Activated CD4-positive, alpha-beta T cell treated with anti-CD3 and anti-CD28 coated beads for 36 hours (primary cell): ENCODE measurements at regions of chr12 and their contacts with region 1.

Region 1: DNA sequence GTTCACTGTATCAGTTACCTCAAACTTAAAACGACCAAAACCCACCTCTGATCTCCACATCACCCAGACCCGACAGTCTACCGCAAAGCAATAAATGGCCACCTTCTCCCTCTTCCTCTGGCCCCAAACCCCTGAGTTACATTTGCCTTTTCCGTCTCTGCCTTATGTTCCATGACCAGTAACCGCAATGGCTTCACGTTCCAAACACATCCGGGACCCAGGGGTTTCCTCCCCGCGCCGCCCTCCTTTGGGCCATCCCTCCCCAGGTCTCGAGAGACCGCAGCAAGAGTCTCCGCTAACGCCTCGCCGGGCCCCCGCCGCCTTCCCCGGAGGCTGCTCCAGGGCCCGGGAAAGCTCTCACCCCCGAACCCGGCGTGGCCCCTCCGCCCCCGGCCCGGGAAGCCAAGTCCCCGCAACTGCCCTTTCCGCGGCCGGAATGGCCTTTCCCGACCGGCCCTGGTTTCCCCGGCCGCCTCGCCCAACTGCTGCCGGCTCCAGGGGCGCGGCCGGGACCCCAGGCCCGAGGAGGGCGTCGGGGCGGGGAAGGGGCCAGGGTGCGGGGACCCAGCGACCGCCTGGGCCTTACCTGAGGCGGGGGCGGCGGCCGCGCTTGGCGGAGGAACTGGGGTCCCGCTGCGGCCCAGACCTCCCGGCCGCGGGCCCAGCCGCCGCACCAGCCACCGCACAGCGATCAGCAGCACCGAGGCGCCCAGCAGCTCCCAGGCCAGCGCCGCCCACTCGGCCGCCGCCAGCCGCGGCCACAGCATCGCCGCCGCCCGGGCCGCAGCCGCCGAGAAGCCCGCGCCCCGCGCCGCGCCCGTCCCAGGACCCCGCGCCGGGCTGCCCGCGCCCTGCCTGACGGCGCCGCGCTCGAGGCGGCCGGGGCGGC is at the start of gene ANKLE2:
- DNase-seq: peak; percentile 84
- ATAC-seq: peak; percentile 41
- H3K4me3 Mint-ChIP-seq: peak within 1 kb of the TSS; percentile 90
- H3K27ac Mint-ChIP-seq: peak within 1 kb of the TSS; percentile 98
- H3K4me1 Mint-ChIP-seq: peaks cover 33% of the 10 kb centered on the region
- H3K27me3 Mint-ChIP-seq: no peaks in the 10 kb centered on the region
- total RNA-seq, gene ANKLE2: 110 to 111 TPM

Region 2: DNA sequence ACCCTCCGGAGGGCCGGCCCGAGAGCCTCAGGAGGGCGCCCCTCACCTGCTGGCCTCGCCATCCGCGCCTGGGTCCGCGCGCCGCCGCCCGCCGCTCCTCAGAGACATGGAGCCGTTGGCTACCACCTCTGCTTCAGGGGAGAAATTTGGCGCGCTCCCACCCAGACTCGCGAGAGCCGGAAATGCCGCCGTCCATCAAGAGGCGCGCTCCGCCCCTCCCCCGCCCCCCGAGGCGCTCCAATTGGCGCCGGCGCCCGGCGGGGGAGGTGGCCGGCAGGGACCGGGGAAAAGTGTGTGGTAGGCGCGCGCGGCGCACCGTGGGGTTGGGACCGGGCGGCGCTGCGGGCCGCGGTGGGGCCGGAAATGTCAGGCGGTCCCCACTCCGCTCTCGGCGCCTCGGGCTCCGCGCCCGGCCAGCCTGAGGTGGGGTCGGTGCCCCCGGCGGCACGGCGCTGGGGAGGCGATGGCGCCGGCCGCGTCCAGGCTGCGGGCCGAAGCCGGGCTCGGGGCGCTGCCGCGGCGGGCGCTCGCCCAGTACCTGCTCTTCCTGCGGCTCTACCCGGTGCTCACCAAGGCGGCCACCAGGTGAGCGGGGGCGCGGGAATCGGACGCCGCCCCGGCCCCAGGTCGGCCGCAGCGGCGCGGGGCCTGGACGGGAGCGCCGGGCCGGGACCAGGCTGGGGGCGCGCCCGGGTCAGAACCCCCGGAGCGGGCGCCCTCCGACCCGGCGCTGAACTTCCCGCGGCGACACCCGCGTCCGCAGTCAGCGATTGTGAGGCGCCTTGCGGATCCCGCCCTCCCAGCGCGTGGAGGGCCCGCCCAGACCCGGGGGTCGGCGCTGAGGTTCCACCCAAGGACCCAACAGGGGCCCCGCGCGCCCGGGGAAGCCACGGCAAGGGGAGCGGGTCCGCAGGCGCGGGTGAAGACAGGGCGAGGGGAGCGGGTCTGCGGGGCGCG is 73.8 kb before region 1 on chr12 and contains the starts of genes POLE and PXMP2:
- CTCF ChIA-PET with region 1: no interaction called
- POLR2A ChIA-PET with region 1: interaction called, 6 read pairs
- intact Hi-C with region 1: loop called (anchors 1 to 2 kb)
- DNase-seq: peak; percentile 98
- ATAC-seq: peak; percentile 94
- H3K4me3 Mint-ChIP-seq: peak within 1 kb of the TSS; percentile 72
- H3K27ac Mint-ChIP-seq: peak within 1 kb of the TSS; percentile 55
- H3K4me1 Mint-ChIP-seq: peaks cover 19% of the 10 kb centered on the region
- H3K27me3 Mint-ChIP-seq: no peaks in the 10 kb centered on the region
- total RNA-seq, gene POLE: 121 to 124 TPM
- total RNA-seq, gene PXMP2: 12.2 to 14.3 TPM

Region 3: DNA sequence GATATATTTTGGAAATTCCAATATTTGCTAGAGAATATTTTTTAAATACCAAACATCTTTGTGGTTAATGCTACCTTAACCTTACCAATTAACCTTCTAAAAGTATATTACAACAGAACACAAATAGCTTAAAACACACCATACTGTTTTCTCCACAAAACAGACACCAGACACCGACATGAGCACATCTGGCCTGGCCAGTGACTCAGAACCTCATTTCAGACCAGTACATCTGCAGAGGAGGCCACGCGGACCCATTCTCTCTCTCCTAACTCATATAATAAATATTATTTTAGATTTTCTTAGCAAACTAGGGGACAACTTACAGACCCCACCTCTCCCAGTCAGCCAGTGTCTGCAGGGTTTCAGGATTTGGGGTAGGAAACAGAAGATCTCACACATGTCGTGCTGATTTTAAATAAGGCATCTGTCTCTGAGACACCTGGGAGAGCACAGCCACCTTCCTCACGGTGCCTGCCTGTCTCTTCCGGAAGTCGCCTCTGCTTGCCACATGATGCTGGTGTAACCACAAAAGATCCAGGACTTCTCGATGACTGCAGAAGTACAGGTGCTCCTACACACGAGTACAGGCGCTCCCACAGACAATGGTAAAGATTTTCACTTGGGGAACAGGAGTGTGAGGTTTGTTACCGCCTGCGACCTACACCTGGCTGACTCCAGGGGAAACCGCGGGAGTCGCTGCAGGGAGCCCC is 10.0 kb after region 1 on chr12:
- CTCF ChIA-PET with region 1: interaction called, 4 read pairs
- POLR2A ChIA-PET with region 1: no interaction called
- intact Hi-C with region 1: loop called in 1 of 2 experiments (anchors 1 kb)
- DNase-seq: peak; percentile 71
- ATAC-seq: peak; percentile 82
- H3K4me3 Mint-ChIP-seq: peak overlapping the region; percentile 52
- H3K27ac Mint-ChIP-seq: peak overlapping the region; percentile 89
- H3K4me1 Mint-ChIP-seq: peaks cover 61% of the 10 kb centered on the region
- H3K27me3 Mint-ChIP-seq: no peaks in the 10 kb centered on the region

Region 4: GRCh38 chr12:132948146-132949066 is 187.1 kb after region 1 on chr12:
- CTCF ChIA-PET with region 1: no interaction called
- POLR2A ChIA-PET with region 1: no interaction called
- intact Hi-C with region 1: no loop called
- DNase-seq: no peak
- ATAC-seq: no peak
- H3K4me3 Mint-ChIP-seq: no peak overlapping the region
- H3K27ac Mint-ChIP-seq: no peak overlapping the region
- H3K4me1 Mint-ChIP-seq: no peaks in the 10 kb centered on the region
- H3K27me3 Mint-ChIP-seq: no peaks in the 10 kb centered on the region

Region 5: DNA sequence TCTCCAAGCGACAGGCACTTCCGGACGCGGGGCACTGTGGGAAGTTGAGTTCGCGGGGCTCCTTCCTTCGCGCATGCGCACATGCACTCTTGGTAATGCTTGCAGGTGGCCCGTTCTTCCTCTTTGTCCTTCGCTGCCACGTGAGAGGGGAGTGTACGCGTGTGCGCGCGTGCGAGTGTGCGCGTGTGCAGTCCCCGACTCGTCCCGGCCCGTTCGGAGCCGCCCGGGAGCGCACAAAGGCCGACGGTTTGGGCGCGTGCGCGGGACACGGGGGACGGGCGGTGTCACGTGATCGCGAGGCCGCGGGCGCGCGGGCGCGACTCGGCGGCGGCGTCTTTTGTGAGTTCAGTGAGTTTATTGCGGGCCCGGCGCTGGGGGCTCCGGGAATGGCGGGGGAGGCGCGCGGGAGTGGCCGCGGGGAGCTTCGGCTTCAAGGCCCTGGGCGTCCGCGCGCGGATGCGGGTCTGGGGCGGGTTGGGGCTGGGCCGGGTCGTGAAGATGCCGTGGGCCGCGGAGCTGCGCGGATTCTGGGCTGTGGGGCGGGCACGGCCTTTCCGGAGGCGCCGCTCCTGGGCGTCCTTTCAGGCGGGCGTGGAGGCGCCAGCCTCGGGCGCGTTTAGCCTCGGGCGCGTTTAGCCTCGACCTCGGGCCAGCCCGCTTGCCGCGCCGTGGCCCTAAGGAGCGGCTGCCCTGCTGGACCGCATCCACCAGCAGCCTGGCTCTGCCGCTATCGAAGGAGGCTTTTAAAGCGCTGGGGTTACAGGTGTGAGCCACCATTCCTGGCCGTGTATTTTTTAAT is 276.1 kb after region 1 on chr12 and contains the start of gene ZNF84:
- CTCF ChIA-PET with region 1: no interaction called
- POLR2A ChIA-PET with region 1: no interaction called
- intact Hi-C with region 1: loop called in 1 of 2 experiments (anchors 2 kb)
- DNase-seq: peak; percentile 98
- ATAC-seq: peak; percentile 97
- H3K4me3 Mint-ChIP-seq: peak within 1 kb of the TSS; percentile 85
- H3K27ac Mint-ChIP-seq: peak within 1 kb of the TSS; percentile 94
- H3K4me1 Mint-ChIP-seq: peaks cover 10% of the 10 kb centered on the region
- H3K27me3 Mint-ChIP-seq: no peaks in the 10 kb centered on the region
- total RNA-seq, gene ZNF84: 21.5 to 24.1 TPM

Region 6: GRCh38 chr12:133073836-133074235 is 312.6 kb after region 1 on chr12:
- CTCF ChIA-PET with region 1: no interaction called
- POLR2A ChIA-PET with region 1: no interaction called
- intact Hi-C with region 1: no loop called
- DNase-seq: no peak
- ATAC-seq: no peak
- H3K4me3 Mint-ChIP-seq: no peak overlapping the region
- H3K27ac Mint-ChIP-seq: no peak overlapping the region
- H3K4me1 Mint-ChIP-seq: no peaks in the 10 kb centered on the region
- H3K27me3 Mint-ChIP-seq: no peaks in the 10 kb centered on the region

Region 7: GRCh38 chr12:133130038-133130807 is 368.9 kb after region 1 on chr12 and contains the starts of genes ZNF10 and ZNF891:
- CTCF ChIA-PET with region 1: no interaction called
- POLR2A ChIA-PET with region 1: no interaction called
- intact Hi-C with region 1: loop called in 1 of 2 experiments (anchors 2 kb)
- DNase-seq: peak; percentile 98
- ATAC-seq: peak; percentile 90
- H3K4me3 Mint-ChIP-seq: peak within 1 kb of the TSS; percentile 86
- H3K27ac Mint-ChIP-seq: peak within 1 kb of the TSS; percentile 98
- H3K4me1 Mint-ChIP-seq: peaks cover 15% of the 10 kb centered on the region
- H3K27me3 Mint-ChIP-seq: no peaks in the 10 kb centered on the region
- total RNA-seq, gene ZNF10: 4.8 to 5.1 TPM
- total RNA-seq, gene ZNF891: 1.9 to 2.1 TPM